Activated CD4-positive, alpha-beta memory T cell treated with anti-CD3 and anti-CD28 coated beads for 36 hours (primary cell): ENCODE measurements at regions of chr1 and their contacts with region 1.

Region 1: GRCh38 chr1:240539769-240540414 is 72.1 kb downstream of the GREM2 start:
- DNase-seq: no peak
- H3K4me3 Mint-ChIP-seq: no peak overlapping the region
- H3K27ac Mint-ChIP-seq: no peak overlapping the region
- H3K4me1 Mint-ChIP-seq: peaks cover 15% of the 10 kb centered on the region
- H3K27me3 Mint-ChIP-seq: no peaks in the 10 kb centered on the region

Region 2: GRCh38 chr1:240597153-240597745 is 57.4 kb after region 1 on chr1:
- CTCF ChIA-PET with region 1: no interaction called
- POLR2A ChIA-PET with region 1: no interaction called
- intact Hi-C with region 1: loop called (anchors 10 kb)
- DNase-seq: no peak
- H3K4me3 Mint-ChIP-seq: no peak overlapping the region
- H3K27ac Mint-ChIP-seq: no peak overlapping the region
- H3K4me1 Mint-ChIP-seq: no peaks in the 10 kb centered on the region
- H3K27me3 Mint-ChIP-seq: no peaks in the 10 kb centered on the region